WTC11 (cell line): ENCODE measurements at regions of chr11 and their contacts with region 1.

Region 1: DNA sequence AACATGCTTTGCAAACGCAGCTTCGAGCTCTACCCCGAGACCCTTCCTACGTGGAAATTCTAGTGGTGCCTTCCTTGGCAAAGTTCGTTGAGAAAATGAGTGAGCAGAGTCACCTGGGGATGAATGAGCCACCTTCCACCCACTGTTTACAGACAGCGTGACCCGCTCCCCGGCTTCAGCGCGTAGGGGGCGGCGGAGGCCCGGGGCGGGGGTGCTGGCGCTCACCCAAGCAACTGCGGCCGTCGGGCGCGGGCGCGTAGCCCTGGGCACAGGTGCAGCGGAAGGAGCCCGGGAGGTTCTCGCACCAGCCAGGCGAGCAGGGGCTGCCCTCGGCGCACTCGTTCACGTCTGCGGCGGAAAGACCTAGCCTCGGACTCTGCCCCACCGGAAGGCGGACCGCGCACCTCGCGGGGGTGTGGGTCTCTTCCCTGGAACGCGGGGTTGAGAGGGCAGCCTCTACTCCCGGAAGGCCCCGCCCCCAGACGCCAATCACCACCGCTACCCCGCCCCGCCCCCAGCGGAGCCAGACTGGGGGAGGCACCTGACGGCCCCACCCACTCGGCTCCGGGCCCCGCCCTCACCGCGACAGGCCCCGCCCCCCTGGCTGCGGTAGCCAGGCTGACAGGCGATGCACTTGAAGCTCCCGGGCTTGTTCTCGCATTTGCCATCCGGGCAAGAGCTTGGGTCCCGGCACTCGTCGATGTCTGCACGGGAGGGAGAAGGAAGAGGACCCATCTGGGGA is 11.8 kb downstream of the LTBP3 start:
- DNase-seq: peak; percentile 99
- ATAC-seq: peak; percentile 78
- H3K4me3 Mint-ChIP-seq: peak overlapping the region; percentile 66
- H3K27ac Mint-ChIP-seq: no peak overlapping the region
- H3K4me1 Mint-ChIP-seq: peaks cover 18% of the 10 kb centered on the region
- H3K27me3 Mint-ChIP-seq: peaks cover 95% of the 10 kb centered on the region
- CTCF ChIP-seq: no peak

Region 2: GRCh38 chr11:65558002-65558931 is 11.9 kb after region 1 on chr11 and contains the start of gene LTBP3:
- CTCF ChIA-PET with region 1: interaction called, 171 read pairs
- POLR2A ChIA-PET with region 1: interaction called, 5 read pairs
- DNase-seq: peak; percentile 60
- ATAC-seq: peak; percentile 32
- H3K4me3 Mint-ChIP-seq: peak within 1 kb of the TSS; percentile 69
- H3K27ac Mint-ChIP-seq: peak within 1 kb of the TSS; percentile 33; the same call in 1 of the 2 replicates
- H3K4me1 Mint-ChIP-seq: peaks cover 50% of the 10 kb centered on the region
- H3K27me3 Mint-ChIP-seq: peaks cover 62% of the 10 kb centered on the region
- CTCF ChIP-seq: no peak
- total RNA-seq, gene LTBP3: 15.9 to 23.6 TPM (median 20.7 TPM) in 3 replicates

Region 3: GRCh38 chr11:65766535-65766934 is 220.1 kb after region 1 on chr11:
- CTCF ChIA-PET with region 1: no interaction called
- POLR2A ChIA-PET with region 1: no interaction called
- DNase-seq: no peak
- ATAC-seq: no peak
- H3K4me3 Mint-ChIP-seq: no peak overlapping the region
- H3K27ac Mint-ChIP-seq: no peak overlapping the region
- H3K4me1 Mint-ChIP-seq: no peaks in the 10 kb centered on the region
- H3K27me3 Mint-ChIP-seq: peaks cover 14% of the 10 kb centered on the region; the same call in 1 of the 2 replicates
- CTCF ChIP-seq: no peak